Testis (tissue), 5 donors: ENCODE measurements at regions of chr19 and their contacts with region 1.

Region 1: GRCh38 chr19:4781801-4782200 is 9.7 kb upstream of the FEM1A start:
- DNase-seq: no peak
- H3K4me3 ChIP-seq: no peak overlapping the region
- H3K27ac ChIP-seq: no peak overlapping the region
- H3K4me1 ChIP-seq: no peaks in the 10 kb centered on the region
- H3K27me3 ChIP-seq: no peaks in the 10 kb centered on the region
- CTCF ChIP-seq: no peak
- POLR2A ChIP-seq: no peak

Region 2: GRCh38 chr19:4732680-4733114 is 49.1 kb before region 1 on chr19:
- intact Hi-C with region 1: loop called (anchors 10 kb)
- DNase-seq: peak; percentile 55
- H3K4me3 ChIP-seq: peak overlapping the region in 1 of 2 donors; percentile 13
- H3K27ac ChIP-seq: no peak overlapping the region
- H3K4me1 ChIP-seq: peaks cover 2% of the 10 kb centered on the region
- H3K27me3 ChIP-seq: no peaks in the 10 kb centered on the region
- CTCF ChIP-seq: peak; percentile 50 to 68 (median 65)
- POLR2A ChIP-seq: no peak